AG04449 (cell line): ENCODE measurements at regions of chr5 and their contacts with region 1.

Region 1: DNA sequence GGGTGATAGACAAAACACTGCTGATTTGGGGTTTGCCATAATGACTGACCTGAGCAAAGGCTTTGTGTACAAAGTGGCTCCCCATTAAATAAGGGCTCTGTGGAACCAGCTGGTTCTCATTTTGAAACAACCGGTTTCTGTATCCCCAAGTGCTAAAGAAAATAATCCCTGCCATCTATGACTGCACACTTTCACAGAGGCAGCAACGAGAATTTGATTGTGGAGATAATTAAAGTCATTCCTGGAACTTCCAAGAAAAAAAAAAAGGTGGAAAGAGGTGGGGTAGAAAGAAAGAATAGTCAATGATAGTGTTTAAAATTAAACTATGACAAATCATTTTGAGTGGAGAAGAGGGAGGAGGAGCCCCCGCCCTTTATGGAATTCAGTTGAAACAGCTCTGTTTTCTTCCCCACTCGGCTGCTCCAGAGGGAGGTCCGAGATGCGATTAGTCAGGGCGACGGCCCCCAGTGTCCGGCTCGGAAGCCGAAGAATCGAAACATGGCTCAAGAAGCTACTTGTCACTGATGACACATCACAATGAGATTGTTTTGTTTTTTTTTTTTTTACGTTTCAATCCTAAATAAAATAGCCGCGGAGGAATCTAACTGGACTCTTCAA is 38.4 kb downstream of the EBF1 start:
- DNase-seq: no peak
- H3K4me3 ChIP-seq: peak overlapping the region; percentile 1
- CTCF ChIP-seq: no peak

Region 2: GRCh38 chr5:159049844-159050315 is 11.4 kb before region 1 on chr5:
- CTCF ChIA-PET with region 1: interaction called, 13 read pairs
- POLR2A ChIA-PET with region 1: no interaction called
- DNase-seq: no peak
- H3K4me3 ChIP-seq: peak overlapping the region; percentile 32
- CTCF ChIP-seq: peak; percentile 26